ENCODE measurements at regions of chr12 and their contacts with region 1.

Region 1: GRCh38 chr12:122078141-122079032 is at the start of gene MLXIP:
- DNase-seq: peak; percentile 79 to 91 (median 86)
- ATAC-seq: peak; percentile 71 to 76
- H3K4me3 Mint-ChIP-seq: peak within 1 kb of the TSS in 9 of 10 donors; percentile 91 to 99 (median 98)
- H3K27ac Mint-ChIP-seq: peak within 1 kb of the TSS; percentile 25 to 97 (median 92)
- H3K4me1 Mint-ChIP-seq: peaks cover 27 to 49% (median 34%) of the 10 kb centered on the region in 4 donors
- H3K27me3 Mint-ChIP-seq: no peaks in the 10 kb centered on the region
- polyA plus RNA-seq, gene MLXIP: 17.3 to 43.3 (median 20.0) TPM

Region 2: GRCh38 chr12:122054842-122055520 is 23.4 kb before region 1 on chr12:
- POLR2A ChIA-PET with region 1: interaction called, 10 read pairs
- DNase-seq: peak in 1 of 10 donors; percentile 52
- ATAC-seq: no peak
- H3K4me3 Mint-ChIP-seq: no peak overlapping the region
- H3K27ac Mint-ChIP-seq: peak overlapping the region in 2 of 10 donors; percentile 67 to 81
- H3K4me1 Mint-ChIP-seq: peaks cover 6 to 8% (median 7%) of the 10 kb centered on the region in 4 donors
- H3K27me3 Mint-ChIP-seq: no peaks in the 10 kb centered on the region

Region 3: DNA sequence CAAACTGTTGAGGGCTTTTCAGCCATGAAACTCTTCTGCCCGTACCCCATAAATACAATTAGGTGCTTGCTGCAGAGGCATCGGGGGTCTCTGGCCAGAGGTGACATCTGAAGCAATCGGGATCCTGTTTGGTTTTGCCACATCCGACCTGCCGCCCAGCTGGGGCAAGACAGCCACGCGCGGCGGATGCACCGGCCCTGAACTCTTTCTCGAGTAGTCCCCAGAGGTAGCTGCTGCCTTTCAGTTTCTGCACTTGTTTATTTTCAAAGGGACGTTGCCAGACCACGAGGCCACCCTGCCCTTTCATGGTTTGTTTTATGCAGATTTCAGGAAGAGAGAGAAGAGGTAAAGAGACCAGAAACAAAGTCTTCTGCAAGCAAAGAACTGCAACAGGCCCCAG is 10.4 kb before region 1 on chr12:
- POLR2A ChIA-PET with region 1: interaction called, 30 read pairs
- DNase-seq: peak in 8 of 10 donors; percentile 24 to 72 (median 50)
- ATAC-seq: peak; percentile 80 to 82
- H3K4me3 Mint-ChIP-seq: peak overlapping the region; percentile 64 to 86 (median 81)
- H3K27ac Mint-ChIP-seq: peak overlapping the region; percentile 44 to 94 (median 81)
- H3K4me1 Mint-ChIP-seq: peaks cover 21 to 39% (median 34%) of the 10 kb centered on the region in 4 donors
- H3K27me3 Mint-ChIP-seq: no peaks in the 10 kb centered on the region

Region 4: DNA sequence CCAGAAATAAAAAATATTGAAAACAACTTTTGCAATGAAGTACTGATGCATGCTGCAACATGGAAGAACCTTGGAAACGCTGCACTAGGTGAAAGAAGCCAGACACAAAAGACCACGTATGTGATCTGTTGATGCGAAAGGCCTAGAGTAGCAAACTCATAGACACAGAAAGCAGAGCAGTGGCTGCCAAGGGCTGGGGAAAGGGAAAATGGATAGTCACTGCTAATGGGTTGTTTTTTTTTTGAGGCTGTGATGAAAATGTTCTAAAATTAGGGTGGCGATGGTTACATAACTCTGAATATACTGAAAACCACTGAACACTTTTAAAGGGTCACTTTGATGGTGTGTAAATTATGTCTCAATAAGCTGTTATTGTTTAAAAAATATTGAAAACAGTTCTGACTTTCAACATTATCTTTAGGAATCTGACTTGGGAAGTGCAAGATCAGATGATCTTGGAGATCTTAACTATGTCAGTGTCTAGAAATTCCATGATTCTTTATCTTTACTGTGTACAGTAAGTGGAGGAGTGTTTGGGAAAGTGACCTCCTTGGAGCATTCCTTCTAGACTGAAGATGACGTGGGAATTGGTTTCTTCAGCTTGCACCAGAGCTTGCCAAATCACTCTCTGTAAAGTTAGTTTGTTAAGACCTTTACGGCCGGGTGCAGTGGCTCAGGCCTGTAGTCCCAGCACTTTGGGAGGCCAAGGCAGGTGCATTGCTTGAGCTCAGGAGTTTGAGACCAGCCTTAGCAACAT is 12.6 kb after region 1 on chr12:
- POLR2A ChIA-PET with region 1: interaction called, 213 read pairs
- DNase-seq: no peak
- ATAC-seq: peak in 1 of 2 donors; percentile 13
- H3K4me3 Mint-ChIP-seq: peak overlapping the region in 8 of 10 donors; percentile 30 to 97 (median 70)
- H3K27ac Mint-ChIP-seq: peak overlapping the region in 2 of 10 donors; percentile 87 to 92
- H3K4me1 Mint-ChIP-seq: peaks cover 29 to 43% (median 31%) of the 10 kb centered on the region in 4 donors
- H3K27me3 Mint-ChIP-seq: no peaks in the 10 kb centered on the region

Region 5: DNA sequence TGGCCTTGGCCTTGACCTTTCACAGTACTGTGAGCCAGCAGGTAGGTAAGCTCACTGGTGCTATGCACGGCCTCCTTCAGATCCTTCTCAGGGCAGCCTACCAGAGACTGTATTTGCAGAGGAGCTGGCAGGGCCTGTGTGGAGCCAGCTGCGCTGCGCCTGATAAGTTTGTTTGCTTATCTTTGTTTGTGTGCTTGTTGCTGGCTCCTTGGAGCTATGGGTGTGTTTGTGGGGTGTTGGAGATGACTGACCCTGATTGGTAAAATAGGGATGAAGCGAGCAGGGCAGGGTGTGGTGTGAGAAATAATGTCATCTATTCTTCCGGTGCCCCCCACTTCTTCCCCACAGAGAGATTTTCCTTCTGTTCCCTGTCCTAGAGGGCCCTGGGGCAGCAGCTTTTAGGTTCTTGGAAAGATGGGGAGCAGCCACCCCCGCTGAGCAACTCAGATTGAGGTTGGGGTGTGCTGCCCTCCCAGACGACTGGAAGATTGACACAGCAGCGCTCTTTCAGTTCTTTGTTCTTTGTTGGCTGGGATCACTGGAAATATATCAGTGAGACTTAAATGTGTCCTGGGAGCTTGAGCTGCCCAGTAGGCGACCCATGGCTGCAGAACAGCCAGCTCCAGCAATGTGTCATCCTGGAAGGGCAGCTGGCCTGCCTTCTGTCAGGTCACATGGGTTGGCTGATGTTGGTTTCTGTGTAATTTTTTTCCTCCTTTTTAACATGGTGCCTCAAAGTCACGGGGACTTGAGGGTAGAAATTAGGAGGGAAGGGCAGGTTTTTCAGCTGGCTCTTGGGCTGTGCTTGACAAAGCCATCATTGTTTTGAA is 19.8 kb after region 1 on chr12:
- POLR2A ChIA-PET with region 1: interaction called, 213 read pairs
- DNase-seq: no peak
- ATAC-seq: peak; percentile 29 to 36
- H3K4me3 Mint-ChIP-seq: peak overlapping the region; percentile 60 to 90 (median 74)
- H3K27ac Mint-ChIP-seq: peak overlapping the region in 9 of 10 donors; percentile 91 to 98 (median 96)
- H3K4me1 Mint-ChIP-seq: peaks cover 37 to 70% (median 65%) of the 10 kb centered on the region in 4 donors
- H3K27me3 Mint-ChIP-seq: no peaks in the 10 kb centered on the region

Region 6: GRCh38 chr12:122123051-122123760 is 44.8 kb after region 1 on chr12:
- POLR2A ChIA-PET with region 1: interaction called, 29 read pairs
- DNase-seq: peak; percentile 58 to 87 (median 78)
- ATAC-seq: peak; percentile 79 to 80
- H3K4me3 Mint-ChIP-seq: peak overlapping the region; percentile 49 to 87 (median 68)
- H3K27ac Mint-ChIP-seq: peak overlapping the region; percentile 81 to 95 (median 87)
- H3K4me1 Mint-ChIP-seq: peaks cover 30 to 74% (median 61%) of the 10 kb centered on the region in 4 donors
- H3K27me3 Mint-ChIP-seq: peaks cover 0 to 1% (median 0%) of the 10 kb centered on the region in 5 donors

Measured in naive thymus-derived CD8-positive, alpha-beta T cell (primary cell).